ENCODE measurements at regions of chr5 and their contacts with region 1.

Region 1: DNA sequence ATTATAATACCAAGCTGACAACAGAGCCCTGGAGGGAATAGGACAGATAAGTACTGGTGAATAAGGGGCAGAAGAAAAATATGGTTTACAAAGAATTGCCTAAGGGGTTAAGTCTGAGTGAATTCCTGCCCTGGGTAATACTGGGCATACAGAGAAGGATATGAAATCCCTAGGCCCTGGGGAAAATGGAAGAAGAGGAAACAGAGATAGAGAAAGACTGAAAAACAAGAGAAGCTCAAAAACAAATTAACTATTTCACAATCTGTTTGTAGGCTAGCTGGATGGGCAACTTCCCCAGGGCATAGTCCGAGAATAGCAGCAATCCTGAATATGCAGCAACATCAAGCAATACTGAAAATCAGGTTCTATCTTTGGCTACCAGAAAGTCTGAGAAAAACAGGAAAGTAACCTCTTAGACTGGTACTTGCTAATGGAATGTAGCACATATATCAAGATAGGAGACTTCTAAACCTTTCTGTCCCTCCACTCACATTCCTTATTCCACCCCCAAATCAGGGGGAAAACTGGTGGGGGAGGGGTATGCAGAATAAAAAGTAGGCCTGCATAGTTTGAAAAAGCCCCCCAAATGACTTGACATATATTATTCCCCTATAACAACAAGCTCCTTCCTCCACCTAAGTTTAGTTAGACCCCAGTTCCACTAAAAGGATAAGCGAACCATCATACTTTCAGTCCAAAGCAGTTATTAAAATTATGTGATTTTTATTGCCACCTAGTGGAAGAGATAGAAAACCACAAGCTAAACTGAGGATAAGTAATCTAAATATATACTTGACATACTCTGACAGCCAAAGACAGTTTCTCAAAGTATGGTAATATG is 20.6 kb downstream of the SLC38A9 start:
- DNase-seq: peak in 1 of 2 experiments; percentile 55
- H3K4me3 ChIP-seq: no peak overlapping the region
- H3K4me3 Mint-ChIP-seq: no peak overlapping the region
- H3K27ac Mint-ChIP-seq: peak overlapping the region; percentile 21
- H3K4me1 ChIP-seq: peaks cover 24% of the 10 kb centered on the region
- H3K4me1 Mint-ChIP-seq: peaks cover 23% of the 10 kb centered on the region
- H3K27me3 ChIP-seq: no peaks in the 10 kb centered on the region
- H3K27me3 Mint-ChIP-seq: no peaks in the 10 kb centered on the region
- CTCF ChIP-seq: peak; percentile 49 to 68

Region 2: GRCh38 chr5:55226027-55226933 is 465.2 kb before region 1 on chr5:
- CTCF ChIA-PET with region 1: no interaction called
- POLR2A ChIA-PET with region 1: no interaction called
- intact Hi-C with region 1: loop called (anchors 5 kb)
- DNase-seq: peak; percentile 86 to 89
- H3K4me3 ChIP-seq: peak overlapping the region; percentile 82
- H3K4me3 Mint-ChIP-seq: peak overlapping the region; percentile 87
- H3K27ac Mint-ChIP-seq: no peak overlapping the region
- H3K4me1 ChIP-seq: no peaks in the 10 kb centered on the region
- H3K4me1 Mint-ChIP-seq: peaks cover 10% of the 10 kb centered on the region
- H3K27me3 ChIP-seq: peaks cover 3% of the 10 kb centered on the region
- H3K27me3 Mint-ChIP-seq: no peaks in the 10 kb centered on the region
- CTCF ChIP-seq: peak; percentile 83 to 91

Region 3: GRCh38 chr5:55324815-55325418 is 366.6 kb before region 1 on chr5:
- CTCF ChIA-PET with region 1: interaction called, 4 read pairs
- POLR2A ChIA-PET with region 1: no interaction called
- intact Hi-C with region 1: loop called (anchors 1 kb)
- DNase-seq: peak in 1 of 2 experiments; percentile 32
- H3K4me3 ChIP-seq: no peak overlapping the region
- H3K4me3 Mint-ChIP-seq: no peak overlapping the region
- H3K27ac Mint-ChIP-seq: no peak overlapping the region
- H3K4me1 ChIP-seq: no peaks in the 10 kb centered on the region
- H3K4me1 Mint-ChIP-seq: no peaks in the 10 kb centered on the region
- H3K27me3 ChIP-seq: no peaks in the 10 kb centered on the region
- H3K27me3 Mint-ChIP-seq: no peaks in the 10 kb centered on the region
- CTCF ChIP-seq: peak; percentile 40 to 54

Region 4: GRCh38 chr5:55407059-55407684 is 284.3 kb before region 1 on chr5:
- CTCF ChIA-PET with region 1: interaction called, 7 read pairs
- POLR2A ChIA-PET with region 1: no interaction called
- intact Hi-C with region 1: loop called (anchors 1 kb)
- DNase-seq: peak in 1 of 2 experiments; percentile 23
- H3K4me3 ChIP-seq: no peak overlapping the region
- H3K4me3 Mint-ChIP-seq: no peak overlapping the region
- H3K27ac Mint-ChIP-seq: no peak overlapping the region
- H3K4me1 ChIP-seq: no peaks in the 10 kb centered on the region
- H3K4me1 Mint-ChIP-seq: peaks cover 6% of the 10 kb centered on the region
- H3K27me3 ChIP-seq: no peaks in the 10 kb centered on the region
- H3K27me3 Mint-ChIP-seq: no peaks in the 10 kb centered on the region
- CTCF ChIP-seq: peak; percentile 62 to 70

Region 5: GRCh38 chr5:55534436-55535198 is 156.9 kb before region 1 on chr5 and contains the start of gene PLPP1:
- CTCF ChIA-PET with region 1: interaction called, 4 read pairs
- POLR2A ChIA-PET with region 1: interaction called, 4 read pairs
- intact Hi-C with region 1: loop called (anchors 1 kb)
- DNase-seq: peak; percentile 90 to 95
- H3K4me3 ChIP-seq: peak within 1 kb of the TSS; percentile 98
- H3K4me3 Mint-ChIP-seq: peak within 1 kb of the TSS; percentile 78
- H3K27ac Mint-ChIP-seq: peak within 1 kb of the TSS; percentile 78
- H3K4me1 ChIP-seq: peaks cover 8% of the 10 kb centered on the region
- H3K4me1 Mint-ChIP-seq: peaks cover 21% of the 10 kb centered on the region
- H3K27me3 ChIP-seq: no peaks in the 10 kb centered on the region
- H3K27me3 Mint-ChIP-seq: no peaks in the 10 kb centered on the region
- CTCF ChIP-seq: peak in 1 of 2 experiments; percentile 0
- total RNA-seq, gene PLPP1: 49.4 and 57.9 TPM in 2 replicates

Region 6: DNA sequence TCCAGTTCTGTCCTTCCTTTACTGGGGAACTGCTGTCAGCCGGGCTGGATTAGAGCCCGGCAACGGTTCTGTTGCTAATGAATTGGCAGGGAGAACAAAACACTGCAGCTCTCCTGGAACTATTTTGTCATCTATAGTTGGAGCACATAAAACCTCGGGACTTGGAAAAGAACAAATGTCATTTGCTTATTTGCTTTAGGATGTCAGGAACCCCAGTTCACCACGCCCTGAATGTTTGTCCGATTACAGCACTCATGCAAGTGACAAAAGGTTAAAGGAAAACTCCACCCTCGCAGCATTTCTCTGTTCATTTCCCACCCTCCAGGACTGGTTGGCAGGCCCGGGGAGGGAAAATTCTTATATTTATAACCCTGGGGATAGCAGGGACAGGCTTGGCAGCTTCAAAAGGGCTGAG is 90.3 kb before region 1 on chr5:
- CTCF ChIA-PET with region 1: interaction called, 3 read pairs
- POLR2A ChIA-PET with region 1: no interaction called
- intact Hi-C with region 1: loop called (anchors 2 kb)
- DNase-seq: peak; percentile 85 to 92
- H3K4me3 ChIP-seq: no peak overlapping the region
- H3K4me3 Mint-ChIP-seq: peak overlapping the region; percentile 68
- H3K27ac Mint-ChIP-seq: peak overlapping the region; percentile 98
- H3K4me1 ChIP-seq: peaks cover 59% of the 10 kb centered on the region
- H3K4me1 Mint-ChIP-seq: peaks cover 30% of the 10 kb centered on the region
- H3K27me3 ChIP-seq: no peaks in the 10 kb centered on the region
- H3K27me3 Mint-ChIP-seq: no peaks in the 10 kb centered on the region
- CTCF ChIP-seq: no peak